Heart right ventricle (tissue), 16 donors: ENCODE measurements at regions of chr10 and their contacts with region 1.

Region 1: DNA sequence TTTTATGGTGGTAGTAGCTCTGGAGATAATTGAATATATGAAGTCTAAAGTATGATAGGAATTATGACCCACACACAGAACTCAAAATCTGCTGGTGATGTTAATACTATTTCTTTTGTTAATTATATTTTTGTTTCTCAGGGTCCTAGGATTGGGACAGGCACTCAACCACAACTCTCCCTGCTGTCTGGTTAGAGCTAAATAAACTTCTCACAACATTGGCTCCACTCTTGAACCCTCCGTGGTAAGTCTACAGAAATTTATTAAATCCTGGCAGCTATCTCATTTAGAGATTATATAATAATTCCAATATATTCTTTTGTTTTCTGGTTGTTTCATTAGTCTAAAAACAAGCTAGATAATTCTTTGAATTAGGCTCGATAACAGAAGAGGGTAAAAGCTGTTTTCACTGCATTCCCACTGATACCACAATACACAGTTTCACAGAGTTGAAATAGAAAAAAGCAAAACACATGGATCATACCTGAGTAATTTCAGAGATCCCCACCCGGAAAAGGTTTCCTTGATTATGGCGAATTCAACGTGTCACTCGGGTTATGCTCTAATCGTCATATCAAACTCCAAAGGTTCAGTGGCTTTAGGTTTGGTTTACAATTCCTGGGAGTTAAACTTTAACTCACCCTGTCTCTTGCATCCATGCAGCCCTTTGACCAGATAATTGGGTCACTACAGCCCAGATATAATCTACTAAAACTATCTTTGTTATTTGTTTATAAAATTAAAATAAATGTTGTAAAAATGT is at the start of gene A1CF:
- DNase-seq: no peak
- ATAC-seq: no peak
- H3K4me3 ChIP-seq: no peak within 1 kb of the TSS
- H3K27ac ChIP-seq: no peak within 1 kb of the TSS
- H3K4me1 ChIP-seq: no peaks in the 10 kb centered on the region
- H3K27me3 ChIP-seq: peaks cover 0 to 21% (median 0%) of the 10 kb centered on the region in 7 donors
- CTCF ChIP-seq: no peak
- total RNA-seq, gene A1CF: not detected

Region 2: GRCh38 chr10:50805981-50806622 is 79.2 kb before region 1 on chr10:
- intact Hi-C with region 1: loop called in 1 of 10 experiments (anchors 1 kb)
- DNase-seq: no peak
- ATAC-seq: no peak
- H3K4me3 ChIP-seq: no peak overlapping the region
- H3K27ac ChIP-seq: no peak overlapping the region
- H3K4me1 ChIP-seq: no peaks in the 10 kb centered on the region
- H3K27me3 ChIP-seq: no peaks in the 10 kb centered on the region
- CTCF ChIP-seq: no peak

Region 3: GRCh38 chr10:51564896-51565510 is 679.7 kb after region 1 on chr10:
- intact Hi-C with region 1: no loop called
- DNase-seq: no peak
- ATAC-seq: no peak
- H3K4me3 ChIP-seq: no peak overlapping the region
- H3K27ac ChIP-seq: no peak overlapping the region
- H3K4me1 ChIP-seq: peaks cover 0 to 8% (median 0%) of the 10 kb centered on the region in 9 donors
- H3K27me3 ChIP-seq: no peaks in the 10 kb centered on the region
- CTCF ChIP-seq: no peak